ENCODE measurements at regions of chr3 and their contacts with region 1.

Region 1: DNA sequence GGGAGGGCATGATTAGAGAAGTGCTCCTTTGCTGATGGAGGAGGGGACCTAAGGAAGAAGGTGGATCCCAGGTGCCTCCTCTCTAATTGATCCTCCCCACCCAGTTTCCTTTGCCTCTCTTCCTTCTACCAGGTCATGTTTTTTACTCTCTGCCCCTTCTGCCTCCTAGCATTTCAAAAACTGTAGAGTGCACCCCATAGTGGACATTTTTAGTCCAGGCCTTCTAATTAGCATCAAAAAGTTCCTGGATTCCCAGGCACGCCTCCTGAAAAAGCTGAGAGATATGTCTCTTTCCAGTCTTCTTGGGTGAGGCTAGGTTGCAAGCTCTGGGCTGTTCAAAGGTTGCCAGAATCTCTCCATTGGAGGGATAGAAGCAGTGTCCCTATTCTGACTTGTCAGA is 18.7 kb upstream of the ITGB5 start:
- DNase-seq: no peak
- ATAC-seq: no peak
- H3K4me3 ChIP-seq: no peak overlapping the region
- H3K4me3 Mint-ChIP-seq: no peak overlapping the region
- H3K27ac ChIP-seq: no peak overlapping the region
- H3K27ac Mint-ChIP-seq: no peak overlapping the region
- H3K4me1 ChIP-seq: peaks cover 4% of the 10 kb centered on the region
- H3K4me1 Mint-ChIP-seq: peaks cover 4% of the 10 kb centered on the region
- H3K27me3 ChIP-seq: no peaks in the 10 kb centered on the region
- H3K27me3 Mint-ChIP-seq: peaks cover 16% of the 10 kb centered on the region
- CTCF ChIP-seq: no peak

Region 2: DNA sequence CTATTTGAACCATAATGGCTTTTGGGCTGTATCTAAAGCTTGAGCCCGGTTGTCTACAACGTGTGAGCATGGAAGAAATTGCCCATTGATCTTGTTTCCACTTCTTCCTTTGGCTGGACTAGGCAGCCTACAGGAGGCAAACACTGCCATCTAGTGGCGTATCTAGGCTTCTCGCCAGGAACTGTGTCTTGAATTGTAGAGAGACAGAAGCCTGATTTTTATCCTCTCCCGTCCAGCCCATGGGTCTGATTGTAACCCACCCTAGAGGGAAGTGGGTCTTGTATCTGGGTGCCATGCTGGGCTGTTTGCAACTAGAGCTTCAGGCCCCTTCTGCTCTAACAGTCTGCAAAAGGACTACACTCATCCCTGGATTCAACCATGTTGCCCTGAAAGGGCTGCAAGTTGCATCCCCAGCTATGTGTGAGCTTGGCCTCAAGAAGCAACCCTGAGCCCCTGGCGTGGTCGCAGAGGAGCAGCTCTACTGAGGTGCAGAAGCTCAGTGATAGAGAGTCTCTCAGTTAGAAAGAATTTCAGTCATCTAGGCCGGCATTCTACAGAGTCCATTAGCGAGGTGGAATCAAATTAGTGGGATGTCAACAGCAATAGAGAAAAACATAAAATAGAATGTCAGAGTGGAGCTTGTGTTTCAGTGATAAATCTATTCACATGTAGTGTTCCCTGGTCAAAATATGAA is 345.8 kb before region 1 on chr3:
- CTCF ChIA-PET with region 1: no interaction called
- POLR2A ChIA-PET with region 1: no interaction called
- intact Hi-C with region 1: loop called (anchors 5 kb)
- DNase-seq: peak in 8 of 9 experiments; percentile 10 to 65 (median 56)
- ATAC-seq: peak; percentile 40
- H3K4me3 ChIP-seq: no peak overlapping the region
- H3K4me3 Mint-ChIP-seq: no peak overlapping the region
- H3K27ac ChIP-seq: no peak overlapping the region
- H3K27ac Mint-ChIP-seq: no peak overlapping the region
- H3K4me1 ChIP-seq: no peaks in the 10 kb centered on the region
- H3K4me1 Mint-ChIP-seq: no peaks in the 10 kb centered on the region
- H3K27me3 ChIP-seq: peaks cover 0 to 3% of the 10 kb centered on the region in 2 experiments
- H3K27me3 Mint-ChIP-seq: peaks cover 37% of the 10 kb centered on the region
- CTCF ChIP-seq: peak; percentile 76

Region 3: GRCh38 chr3:124786441-124787241 is 119.2 kb before region 1 on chr3:
- CTCF ChIA-PET with region 1: interaction called, 13 read pairs
- POLR2A ChIA-PET with region 1: no interaction called
- intact Hi-C with region 1: loop called in 1 of 2 experiments (anchors 1 kb)
- DNase-seq: no peak
- ATAC-seq: no peak
- H3K4me3 ChIP-seq: no peak overlapping the region
- H3K4me3 Mint-ChIP-seq: no peak overlapping the region
- H3K27ac ChIP-seq: no peak overlapping the region
- H3K27ac Mint-ChIP-seq: no peak overlapping the region
- H3K4me1 ChIP-seq: no peaks in the 10 kb centered on the region
- H3K4me1 Mint-ChIP-seq: no peaks in the 10 kb centered on the region
- H3K27me3 ChIP-seq: no peaks in the 10 kb centered on the region
- H3K27me3 Mint-ChIP-seq: peaks cover 3% of the 10 kb centered on the region
- CTCF ChIP-seq: no peak

Region 4: DNA sequence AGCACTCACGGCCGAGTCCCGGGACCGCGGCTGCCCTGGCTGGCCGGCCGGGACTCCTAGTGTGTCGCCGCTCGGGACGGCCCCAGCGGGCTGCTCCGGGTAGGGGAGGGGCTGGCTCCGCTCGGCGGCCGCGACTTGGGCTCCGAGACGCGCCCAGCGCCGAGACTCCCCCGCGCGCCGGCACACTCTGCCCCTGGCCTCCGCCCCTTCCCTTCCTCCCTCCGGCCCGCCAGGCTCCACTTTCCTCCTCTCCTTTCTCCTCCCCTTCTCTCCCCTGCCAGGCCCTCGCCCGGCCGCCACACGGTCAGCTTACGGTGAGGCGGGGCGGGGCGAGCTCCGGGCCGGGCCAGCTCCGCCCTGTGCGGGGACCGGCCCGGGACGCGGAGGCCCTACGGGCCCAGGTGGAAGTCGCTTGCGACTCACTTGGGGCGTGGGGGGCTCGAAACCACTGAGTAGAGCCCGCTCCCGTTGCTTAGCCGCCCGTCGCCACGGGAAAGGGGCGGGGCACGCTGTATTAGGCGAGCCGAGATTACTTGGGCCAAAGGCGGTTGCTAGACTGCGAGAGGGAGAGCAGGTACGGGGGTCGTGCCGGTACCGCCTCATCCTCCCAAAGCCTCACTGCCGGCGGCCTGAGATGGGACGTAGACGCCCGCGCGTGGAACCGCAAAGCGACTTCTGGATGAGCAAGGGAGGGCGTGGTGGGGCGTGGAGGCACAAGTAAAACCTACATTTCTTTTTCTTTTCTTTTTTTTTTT is 18.5 kb before region 1 on chr3 and contains the start of gene ITGB5:
- CTCF ChIA-PET with region 1: interaction called, 11 read pairs
- POLR2A ChIA-PET with region 1: no interaction called
- intact Hi-C with region 1: no loop called
- DNase-seq: peak in 6 of 9 experiments; percentile 10 to 54 (median 22)
- ATAC-seq: peak; percentile 53
- H3K4me3 ChIP-seq: peak within 1 kb of the TSS; percentile 50 to 57
- H3K4me3 Mint-ChIP-seq: peak within 1 kb of the TSS; percentile 59
- H3K27ac ChIP-seq: no peak within 1 kb of the TSS
- H3K27ac Mint-ChIP-seq: no peak within 1 kb of the TSS
- H3K4me1 ChIP-seq: peaks cover 4% of the 10 kb centered on the region
- H3K4me1 Mint-ChIP-seq: peaks cover 6% of the 10 kb centered on the region
- H3K27me3 ChIP-seq: peaks cover 11 to 12% of the 10 kb centered on the region in 2 experiments
- H3K27me3 Mint-ChIP-seq: peaks cover 53% of the 10 kb centered on the region
- CTCF ChIP-seq: no peak
- total RNA-seq, gene ITGB5: 0.56 TPM in 1 of 2 experiments, not detected in the other